ENCODE measurements at regions of chr6 and their contacts with region 1.

Region 1: GRCh38 chr6:3157131-3157927 is at the start of gene TUBB2A:
- DNase-seq: peak; percentile 83 to 96 (median 90)
- ATAC-seq: peak; percentile 87
- H3K4me3 ChIP-seq: peak within 1 kb of the TSS; percentile 61
- H3K4me3 Mint-ChIP-seq: peak within 1 kb of the TSS; percentile 81 to 94 (median 92)
- H3K27ac ChIP-seq: peak within 1 kb of the TSS; percentile 86
- H3K27ac Mint-ChIP-seq: peak within 1 kb of the TSS; percentile 75 to 96 (median 93)
- H3K4me1 ChIP-seq: peaks cover 15 to 17% of the 10 kb centered on the region in 2 donors
- H3K4me1 Mint-ChIP-seq: peaks cover 4 to 37% (median 33%) of the 10 kb centered on the region in 7 donors
- H3K27me3 ChIP-seq: no peaks in the 10 kb centered on the region
- H3K27me3 Mint-ChIP-seq: peaks cover 0 to 52% (median 4%) of the 10 kb centered on the region in 5 donors
- total RNA-seq, gene TUBB2A: 2.2 to 39.6 (median 3.1) TPM

Region 2: GRCh38 chr6:3180350-3180749 is 23.0 kb after region 1 on chr6:
- CTCF ChIA-PET with region 1: no interaction called
- POLR2A ChIA-PET with region 1: interaction called, 3 read pairs
- intact Hi-C with region 1: loop called in 1 of 2 experiments (anchors 1 kb)
- DNase-seq: no peak
- ATAC-seq: no peak
- H3K4me3 ChIP-seq: no peak overlapping the region
- H3K4me3 Mint-ChIP-seq: peak overlapping the region in 1 of 10 donors; percentile 81
- H3K27ac ChIP-seq: no peak overlapping the region
- H3K27ac Mint-ChIP-seq: no peak overlapping the region
- H3K4me1 ChIP-seq: no peaks in the 10 kb centered on the region
- H3K4me1 Mint-ChIP-seq: peaks cover 0 to 4% (median 0%) of the 10 kb centered on the region in 7 donors
- H3K27me3 ChIP-seq: no peaks in the 10 kb centered on the region
- H3K27me3 Mint-ChIP-seq: peaks cover 0 to 8% (median 6%) of the 10 kb centered on the region in 5 donors

Region 3: GRCh38 chr6:3258720-3259490 is 101.6 kb after region 1 on chr6 and contains the start of gene PSMG4:
- CTCF ChIA-PET with region 1: no interaction called
- POLR2A ChIA-PET with region 1: interaction called, 5 read pairs
- intact Hi-C with region 1: loop called (anchors 1 kb)
- DNase-seq: peak; percentile 81 to 98 (median 89)
- ATAC-seq: peak; percentile 97
- H3K4me3 ChIP-seq: peak within 1 kb of the TSS; percentile 85
- H3K4me3 Mint-ChIP-seq: peak within 1 kb of the TSS; percentile 85 to 99 (median 97)
- H3K27ac ChIP-seq: peak within 1 kb of the TSS; percentile 80
- H3K27ac Mint-ChIP-seq: peak within 1 kb of the TSS; percentile 84 to 98 (median 92)
- H3K4me1 ChIP-seq: peaks cover 19 to 26% of the 10 kb centered on the region in 2 donors
- H3K4me1 Mint-ChIP-seq: peaks cover 28 to 45% (median 42%) of the 10 kb centered on the region in 7 donors
- H3K27me3 ChIP-seq: no peaks in the 10 kb centered on the region
- H3K27me3 Mint-ChIP-seq: peaks cover 0 to 25% (median 0%) of the 10 kb centered on the region in 5 donors
- total RNA-seq, gene PSMG4: 15.6 to 45.0 (median 27.7) TPM